ENCODE measurements at regions of chr2 and their contacts with region 1.

Region 1: DNA sequence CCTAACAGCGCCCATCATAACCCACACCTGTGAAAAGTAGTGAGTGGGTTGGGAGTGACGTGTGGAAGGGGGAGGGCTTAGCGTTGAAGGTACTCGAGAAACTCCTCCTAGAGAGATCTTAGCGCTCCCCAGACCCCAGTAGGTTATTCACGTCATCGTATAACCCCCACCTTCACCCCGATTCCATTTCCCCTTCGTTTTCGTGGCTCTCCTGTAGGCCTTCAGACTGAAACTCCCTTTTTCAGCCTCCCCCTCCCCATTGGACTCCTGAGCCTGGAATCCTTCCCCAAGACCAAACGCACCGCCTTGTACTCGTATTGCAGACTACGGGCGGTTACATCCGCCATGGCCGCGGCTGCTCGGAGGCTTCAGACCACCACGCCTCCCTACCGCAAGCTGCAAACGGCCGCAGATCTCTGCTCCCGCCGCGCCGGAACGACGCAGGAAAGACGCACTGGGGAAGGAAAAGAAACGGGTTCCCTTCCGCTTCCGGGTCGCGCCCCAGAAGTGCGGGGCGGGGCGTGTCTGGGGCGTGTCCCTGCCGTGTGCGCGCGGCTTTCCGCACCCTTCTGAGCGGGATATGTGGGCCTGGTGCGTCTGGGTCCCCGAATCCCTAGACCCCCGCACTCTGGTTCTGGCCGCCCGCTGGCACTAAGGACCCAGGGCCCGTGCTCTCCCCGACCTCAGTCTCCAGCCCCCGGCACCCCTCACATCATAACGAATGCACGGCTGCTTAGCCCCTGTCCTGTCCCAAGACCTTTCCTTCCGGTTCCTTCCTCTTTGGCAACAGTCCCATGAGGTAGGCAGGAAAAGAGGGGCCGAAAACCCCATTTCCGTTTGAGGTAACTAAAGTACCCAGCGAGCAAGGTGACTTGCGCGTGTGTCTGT is at the start of gene SNRNP200:
- DNase-seq: peak; percentile 87
- H3K4me3 Mint-ChIP-seq: peak within 1 kb of the TSS; percentile 99
- H3K27ac Mint-ChIP-seq: peak within 1 kb of the TSS; percentile 96
- H3K4me1 Mint-ChIP-seq: peaks cover 45% of the 10 kb centered on the region
- H3K27me3 Mint-ChIP-seq: no peaks in the 10 kb centered on the region
- total RNA-seq, gene SNRNP200: 192 and 196 TPM in 2 replicates

Region 2: GRCh38 chr2:96157651-96158553 is 147.4 kb before region 1 on chr2:
- intact Hi-C with region 1: loop called (anchors 5 kb)
- DNase-seq: peak; percentile 74
- H3K4me3 Mint-ChIP-seq: peak overlapping the region; percentile 65
- H3K27ac Mint-ChIP-seq: peak overlapping the region; percentile 87
- H3K4me1 Mint-ChIP-seq: peaks cover 74% of the 10 kb centered on the region
- H3K27me3 Mint-ChIP-seq: no peaks in the 10 kb centered on the region

Region 3: GRCh38 chr2:96241900-96242611 is 63.3 kb before region 1 on chr2:
- intact Hi-C with region 1: loop called (anchors 1 kb)
- DNase-seq: peak; percentile 62
- H3K4me3 Mint-ChIP-seq: peak overlapping the region; percentile 63
- H3K27ac Mint-ChIP-seq: peak overlapping the region; percentile 87
- H3K4me1 Mint-ChIP-seq: peaks cover 52% of the 10 kb centered on the region
- H3K27me3 Mint-ChIP-seq: no peaks in the 10 kb centered on the region

Region 4: DNA sequence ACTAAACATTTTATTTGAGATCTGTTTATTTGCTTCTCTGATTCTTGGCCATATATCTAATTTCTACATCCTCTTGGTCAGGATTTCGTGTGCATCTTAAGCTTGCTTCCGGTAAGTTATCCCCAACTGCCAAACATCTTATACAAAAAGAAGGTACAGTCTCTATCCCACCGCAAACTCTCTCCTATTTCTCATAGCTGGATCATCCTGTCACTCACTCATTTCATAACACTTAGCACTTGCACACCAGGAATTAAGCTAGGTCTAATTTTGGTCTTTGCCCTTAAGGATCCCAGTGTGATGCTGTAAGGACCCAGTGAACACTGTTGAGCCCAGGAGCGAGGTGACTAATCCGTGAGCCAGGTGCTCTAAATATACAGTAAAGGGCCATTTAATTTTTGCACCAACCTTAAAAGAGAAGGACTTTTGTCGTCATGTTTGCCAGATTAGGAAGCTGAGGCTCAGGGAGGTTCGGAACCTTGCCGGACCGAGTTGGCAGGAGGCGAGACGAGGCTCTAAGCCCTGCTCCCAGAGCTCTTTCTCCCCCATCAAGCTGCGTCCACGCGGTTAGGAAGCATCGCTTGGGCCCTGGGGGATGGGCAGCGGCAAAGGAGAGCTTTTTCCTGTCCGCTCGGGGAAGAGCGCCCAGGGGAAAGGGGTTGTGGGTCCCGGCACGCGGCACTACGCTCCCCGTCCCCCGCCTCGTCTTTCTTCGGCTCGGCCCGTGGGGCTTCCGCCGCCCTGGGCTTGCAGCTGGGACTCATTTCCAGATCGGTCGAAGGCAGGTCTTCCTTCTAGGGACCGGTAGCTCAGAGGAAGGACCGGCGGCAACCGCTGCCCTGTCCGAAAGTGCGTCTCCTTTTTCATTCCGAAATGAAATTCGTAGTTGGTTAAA is 15.6 kb after region 1 on chr2:
- intact Hi-C with region 1: loop called (anchors 1 kb)
- DNase-seq: peak; percentile 26
- H3K4me3 Mint-ChIP-seq: peak overlapping the region; percentile 88
- H3K27ac Mint-ChIP-seq: peak overlapping the region; percentile 85
- H3K4me1 Mint-ChIP-seq: peaks cover 63% of the 10 kb centered on the region
- H3K27me3 Mint-ChIP-seq: no peaks in the 10 kb centered on the region

Region 5: DNA sequence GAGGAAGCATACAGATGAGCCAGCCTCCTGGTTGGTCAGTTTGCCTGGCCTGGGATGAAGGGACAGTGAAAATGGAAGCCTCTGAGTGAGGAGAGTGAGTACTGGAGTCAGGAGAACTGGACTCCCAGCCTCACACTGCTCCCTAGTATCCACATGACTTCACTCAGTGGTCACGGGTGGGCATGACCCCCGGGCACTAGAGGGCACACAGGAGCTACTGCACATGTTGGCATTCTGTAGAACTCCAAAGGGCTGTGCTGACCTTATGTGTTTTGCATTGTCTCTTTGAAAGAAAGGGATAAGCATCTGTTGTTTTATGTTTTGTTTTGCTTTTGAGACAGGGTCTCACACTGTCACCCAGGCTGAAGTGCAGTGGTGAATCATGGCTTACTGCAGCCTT is 54.0 kb after region 1 on chr2:
- intact Hi-C with region 1: no loop called
- DNase-seq: no peak
- H3K4me3 Mint-ChIP-seq: no peak overlapping the region
- H3K27ac Mint-ChIP-seq: no peak overlapping the region
- H3K4me1 Mint-ChIP-seq: no peaks in the 10 kb centered on the region
- H3K27me3 Mint-ChIP-seq: no peaks in the 10 kb centered on the region

Region 6: DNA sequence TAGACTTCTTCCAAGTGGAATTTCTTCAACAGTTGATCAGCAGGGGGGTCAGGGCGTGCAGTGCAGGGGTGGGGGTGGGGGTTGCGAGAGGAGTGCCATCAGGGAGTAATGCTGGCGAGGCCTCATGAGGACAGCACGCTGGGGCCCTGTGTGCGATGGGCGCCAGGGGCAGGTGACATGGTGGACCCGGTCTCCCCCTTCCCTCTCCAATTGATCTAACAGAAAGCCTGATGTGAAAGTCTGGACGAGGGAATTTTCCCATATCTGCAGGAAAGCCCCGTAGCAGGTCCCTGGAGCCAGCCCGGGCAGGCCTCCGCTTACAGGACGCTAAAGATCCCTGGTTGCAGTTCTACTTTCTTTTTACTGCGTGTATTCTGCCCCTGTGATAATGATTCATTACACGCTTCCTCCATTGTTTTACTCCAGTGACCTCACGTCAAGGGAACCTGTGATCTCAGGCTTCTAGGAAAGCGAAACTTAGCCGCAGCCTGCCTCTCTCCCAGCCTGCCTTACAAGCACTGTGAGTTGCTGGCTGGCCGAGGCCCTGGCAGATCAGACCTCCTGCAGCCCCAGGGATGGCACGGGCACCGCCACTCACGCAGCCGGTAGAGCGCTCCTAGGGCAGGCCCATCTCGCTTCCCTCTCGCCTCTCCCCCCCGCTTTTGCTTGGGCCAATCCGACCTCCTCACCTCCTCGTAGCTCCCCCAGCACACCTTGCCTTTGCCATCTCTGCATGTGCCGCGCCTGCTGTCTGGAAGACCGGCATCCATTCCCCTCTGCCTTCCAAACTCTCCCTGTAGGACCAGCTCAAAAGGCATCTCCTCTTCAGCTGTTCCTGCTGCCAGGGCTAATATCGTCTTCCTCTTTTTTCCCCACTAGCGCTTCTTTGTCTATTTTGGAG is 180.7 kb after region 1 on chr2:
- intact Hi-C with region 1: loop called (anchors 1 kb)
- DNase-seq: peak; percentile 88
- H3K4me3 Mint-ChIP-seq: peak overlapping the region; percentile 92
- H3K27ac Mint-ChIP-seq: peak overlapping the region; percentile 96
- H3K4me1 Mint-ChIP-seq: peaks cover 63% of the 10 kb centered on the region
- H3K27me3 Mint-ChIP-seq: peaks cover 5% of the 10 kb centered on the region

Region 7: GRCh38 chr2:96532705-96533291 is 227.5 kb after region 1 on chr2:
- intact Hi-C with region 1: no loop called
- DNase-seq: no peak
- H3K4me3 Mint-ChIP-seq: peak overlapping the region; percentile 78
- H3K27ac Mint-ChIP-seq: peak overlapping the region; percentile 86
- H3K4me1 Mint-ChIP-seq: peaks cover 85% of the 10 kb centered on the region
- H3K27me3 Mint-ChIP-seq: peaks cover 1% of the 10 kb centered on the region

Region 8: DNA sequence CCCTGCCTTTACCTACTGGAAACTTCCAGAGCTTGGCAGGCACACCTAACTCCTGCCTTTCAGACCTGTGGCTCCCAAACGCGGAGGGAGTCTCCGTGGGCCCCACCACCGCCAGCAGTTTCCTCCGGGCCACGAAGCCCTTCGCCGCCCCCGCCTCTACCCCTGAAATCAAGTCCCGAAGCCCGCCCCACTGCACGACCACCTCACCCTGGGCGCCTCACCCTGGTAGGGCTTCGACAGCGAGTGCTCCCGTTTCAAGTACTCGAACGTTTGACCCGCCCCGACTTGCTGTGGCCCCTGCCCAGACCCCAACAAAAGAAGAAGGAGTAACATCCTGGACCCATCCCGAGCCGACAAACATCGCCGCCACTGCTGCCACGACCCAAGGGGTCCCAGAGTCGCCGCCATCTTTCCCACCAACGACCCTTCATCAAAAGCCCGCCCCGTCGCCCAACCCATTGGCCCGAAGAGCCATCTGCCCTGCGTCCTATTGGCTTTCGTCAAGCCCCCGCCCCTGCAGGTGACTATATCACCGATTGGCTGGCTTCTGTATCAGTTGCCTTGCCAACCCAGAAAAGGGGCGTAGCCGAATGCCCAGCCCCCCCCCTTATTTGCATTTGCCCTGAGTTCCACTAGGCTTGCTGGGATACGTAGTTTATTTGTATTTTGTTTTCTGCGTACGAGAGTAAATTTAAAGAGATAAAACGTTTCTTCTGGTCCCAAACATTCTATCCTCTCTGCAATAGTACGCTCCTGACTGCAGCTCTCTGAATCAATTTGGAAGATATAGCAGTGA is 434.5 kb after region 1 on chr2 and contains the start of gene LMAN2L:
- intact Hi-C with region 1: loop called (anchors 1 kb)
- DNase-seq: peak; percentile 94
- H3K4me3 Mint-ChIP-seq: peak within 1 kb of the TSS; percentile 90
- H3K27ac Mint-ChIP-seq: peak within 1 kb of the TSS; percentile 77
- H3K4me1 Mint-ChIP-seq: peaks cover 32% of the 10 kb centered on the region
- H3K27me3 Mint-ChIP-seq: no peaks in the 10 kb centered on the region
- total RNA-seq, gene LMAN2L: 5.6 and 6.0 TPM in 2 replicates

Measured in activated T-helper 1 cell treated with anti-CD3 and anti-CD28 coated beads, Interleukin-12 subunit alpha, Interleukin-12 subunit beta, Interleukin-2, Interleukin-4 antibody, amounts not matched to agents 30 ng/mL and 10 ng/mL and 1 ng/mL, durations not matched to agents 14 hours and 24 hours and 36 hours (primary cell).